Natural killer cell (primary cell): ENCODE measurements at regions of chr2 and their contacts with region 1.

Region 1: DNA sequence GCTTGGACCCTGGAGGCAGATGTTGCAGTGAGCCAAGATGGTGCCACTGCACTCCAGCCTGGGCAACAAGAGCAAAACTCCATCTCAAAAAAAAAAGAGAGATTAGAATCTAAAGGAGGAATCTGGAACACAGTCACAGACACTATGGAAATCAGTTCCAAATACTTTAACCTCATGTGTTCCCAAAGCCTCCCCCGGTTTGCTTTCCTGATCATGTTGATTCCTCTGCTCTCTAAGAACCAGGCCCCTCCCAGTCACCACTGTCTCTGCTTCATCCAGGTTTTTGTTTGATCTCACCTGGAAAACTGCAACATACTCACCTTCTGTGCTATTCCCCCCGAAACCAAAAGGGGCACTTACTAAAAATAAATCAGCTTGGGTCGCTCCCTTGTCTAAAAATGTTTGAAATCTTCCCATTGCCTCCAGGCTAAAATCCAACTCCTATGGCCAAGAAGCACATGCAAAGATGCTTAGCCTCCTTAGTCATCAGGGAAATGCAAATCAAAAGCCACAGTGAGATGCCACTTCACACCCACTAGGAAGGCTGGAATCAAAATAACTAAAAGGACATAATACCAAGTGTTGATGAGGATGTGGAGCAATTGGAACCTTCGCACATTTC is 6.2 kb upstream of the NEU2 start:
- DNase-seq: no peak
- ATAC-seq: no peak
- H3K4me3 ChIP-seq: no peak overlapping the region
- H3K4me3 Mint-ChIP-seq: no peak overlapping the region
- H3K27ac ChIP-seq: no peak overlapping the region
- H3K27ac Mint-ChIP-seq: no peak overlapping the region
- H3K4me1 ChIP-seq: no peaks in the 10 kb centered on the region
- H3K4me1 Mint-ChIP-seq: no peaks in the 10 kb centered on the region
- H3K27me3 ChIP-seq: no peaks in the 10 kb centered on the region
- H3K27me3 Mint-ChIP-seq: no peaks in the 10 kb centered on the region
- CTCF ChIP-seq: no peak

Region 2: DNA sequence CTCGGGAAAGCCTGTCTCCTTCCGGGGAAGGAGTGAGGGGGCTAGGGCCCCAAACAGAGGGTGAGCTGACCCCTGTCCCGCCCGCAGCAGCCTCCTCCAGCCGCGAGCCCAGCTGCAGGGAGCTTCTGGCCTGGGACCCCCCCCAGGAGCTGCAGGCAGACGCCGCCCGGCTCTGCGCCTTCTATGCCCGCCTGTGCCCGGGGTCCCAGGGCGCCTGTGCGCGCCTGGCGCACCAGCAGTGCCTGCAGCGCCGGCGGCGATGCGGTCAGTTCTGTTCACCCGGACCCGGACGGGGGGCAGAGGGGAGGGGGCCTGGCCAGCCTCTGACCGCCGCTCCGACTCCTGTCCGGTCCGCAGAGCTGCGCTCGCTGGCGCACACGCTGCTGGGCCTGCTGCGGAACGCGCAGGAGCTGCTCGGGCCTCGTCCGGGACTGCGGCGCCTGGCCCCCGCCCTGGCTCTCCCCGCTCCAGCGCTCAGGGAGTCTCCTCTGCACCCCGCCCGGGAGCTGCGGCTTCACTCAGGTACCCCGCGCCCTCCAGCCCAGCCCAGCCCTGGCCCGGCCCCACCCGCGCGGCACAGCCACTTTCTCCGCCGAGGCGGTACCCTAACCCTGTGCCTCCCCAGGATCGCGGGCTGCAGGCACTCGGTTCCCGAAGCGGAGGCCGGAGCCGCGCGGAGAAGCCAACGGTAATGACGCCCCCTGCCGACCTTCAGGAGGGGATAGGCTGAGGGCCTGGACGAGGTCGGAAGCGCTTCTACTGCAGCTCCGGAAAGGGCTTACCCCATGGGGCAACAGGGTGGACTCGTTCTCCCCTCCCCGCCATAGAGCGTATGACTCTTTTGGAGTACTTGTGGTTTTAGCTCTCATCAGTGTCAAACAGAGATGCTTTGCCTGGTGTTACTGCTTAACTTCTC is 502.4 kb before region 1 on chr2:
- intact Hi-C with region 1: no loop called
- DNase-seq: peak in 1 of 2 donors; percentile 39
- ATAC-seq: no peak
- H3K4me3 ChIP-seq: no peak overlapping the region
- H3K4me3 Mint-ChIP-seq: no peak overlapping the region
- H3K27ac ChIP-seq: no peak overlapping the region
- H3K27ac Mint-ChIP-seq: no peak overlapping the region
- H3K4me1 ChIP-seq: peaks cover 37% of the 10 kb centered on the region
- H3K4me1 Mint-ChIP-seq: peaks cover 6 to 14% of the 10 kb centered on the region in 2 donors
- H3K27me3 ChIP-seq: peaks cover 18% of the 10 kb centered on the region
- H3K27me3 Mint-ChIP-seq: peaks cover 12 to 29% of the 10 kb centered on the region in 2 donors
- CTCF ChIP-seq: no peak

Region 3: GRCh38 chr2:232600053-232600773 is 426.1 kb before region 1 on chr2:
- intact Hi-C with region 1: loop called (anchors 10 kb)
- DNase-seq: no peak
- ATAC-seq: no peak
- H3K4me3 ChIP-seq: no peak overlapping the region
- H3K4me3 Mint-ChIP-seq: no peak overlapping the region
- H3K27ac ChIP-seq: no peak overlapping the region
- H3K27ac Mint-ChIP-seq: no peak overlapping the region
- H3K4me1 ChIP-seq: no peaks in the 10 kb centered on the region
- H3K4me1 Mint-ChIP-seq: no peaks in the 10 kb centered on the region
- H3K27me3 ChIP-seq: no peaks in the 10 kb centered on the region
- H3K27me3 Mint-ChIP-seq: peaks cover 6 to 14% of the 10 kb centered on the region in 2 donors
- CTCF ChIP-seq: no peak